ENCODE measurements at regions of chr6 and their contacts with region 1.

Region 1: GRCh38 chr6:6407071-6407741 is 86.7 kb upstream of the F13A1 start:
- DNase-seq: peak; percentile 92
- H3K4me3 ChIP-seq: peak overlapping the region; percentile 54
- H3K27ac ChIP-seq: peak overlapping the region; percentile 94
- H3K4me1 ChIP-seq: peaks cover 85% of the 10 kb centered on the region
- CTCF ChIP-seq: no peak

Region 2: GRCh38 chr6:6386010-6386409 is 21.2 kb before region 1 on chr6:
- CTCF ChIA-PET with region 1: interaction called, 3 read pairs
- POLR2A ChIA-PET with region 1: interaction called, 42 read pairs
- intact Hi-C with region 1: no loop called
- DNase-seq: no peak
- H3K4me3 ChIP-seq: no peak overlapping the region
- H3K27ac ChIP-seq: peak overlapping the region; percentile 82
- H3K4me1 ChIP-seq: peaks cover 91% of the 10 kb centered on the region
- CTCF ChIP-seq: no peak

Region 3: GRCh38 chr6:6420107-6420506 is 12.9 kb after region 1 on chr6:
- CTCF ChIA-PET with region 1: no interaction called
- POLR2A ChIA-PET with region 1: interaction called, 16 read pairs
- intact Hi-C with region 1: no loop called
- DNase-seq: no peak
- H3K4me3 ChIP-seq: no peak overlapping the region
- H3K27ac ChIP-seq: no peak overlapping the region
- H3K4me1 ChIP-seq: no peaks in the 10 kb centered on the region
- CTCF ChIP-seq: no peak

Region 4: DNA sequence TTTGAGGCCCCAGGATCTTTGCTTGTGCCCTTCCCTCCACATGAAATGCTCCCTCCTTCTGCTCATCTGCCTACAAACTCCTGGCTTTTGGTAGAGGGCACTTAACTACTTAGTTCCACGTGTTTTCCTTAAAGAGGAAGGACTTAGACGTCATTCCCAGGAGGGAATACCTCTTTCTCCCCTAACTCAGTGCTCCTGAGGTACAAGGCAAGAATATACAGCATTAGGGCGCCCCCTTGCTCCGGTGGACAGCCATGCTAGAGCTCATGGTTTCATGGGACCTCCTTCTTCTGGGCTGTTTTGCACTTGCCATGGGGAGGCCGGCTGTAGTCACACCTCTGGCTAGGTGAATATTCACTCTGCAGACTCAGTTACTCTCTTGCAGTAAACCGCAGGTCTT is 87.5 kb after region 1 on chr6:
- CTCF ChIA-PET with region 1: interaction called, 3 read pairs
- POLR2A ChIA-PET with region 1: no interaction called
- intact Hi-C with region 1: loop called (anchors 1 kb)
- DNase-seq: peak; percentile 85
- H3K4me3 ChIP-seq: no peak overlapping the region
- H3K27ac ChIP-seq: peak overlapping the region; percentile 55
- H3K4me1 ChIP-seq: peaks cover 24% of the 10 kb centered on the region
- CTCF ChIP-seq: peak; percentile 99

Region 5: GRCh38 chr6:6538261-6538660 is 131.1 kb after region 1 on chr6:
- CTCF ChIA-PET with region 1: no interaction called
- POLR2A ChIA-PET with region 1: no interaction called
- intact Hi-C with region 1: no loop called
- DNase-seq: no peak
- H3K4me3 ChIP-seq: no peak overlapping the region
- H3K27ac ChIP-seq: no peak overlapping the region
- H3K4me1 ChIP-seq: no peaks in the 10 kb centered on the region
- CTCF ChIP-seq: no peak

Region 6: GRCh38 chr6:7507600-7507999 is 1100.4 kb after region 1 on chr6:
- CTCF ChIA-PET with region 1: no interaction called
- POLR2A ChIA-PET with region 1: interaction called, 11 read pairs
- intact Hi-C with region 1: no loop called
- DNase-seq: no peak
- H3K4me3 ChIP-seq: no peak overlapping the region
- H3K27ac ChIP-seq: no peak overlapping the region
- H3K4me1 ChIP-seq: no peaks in the 10 kb centered on the region
- CTCF ChIP-seq: no peak